Endothelial cell of umbilical vein (primary cell): ENCODE measurements at regions of chr5 and their contacts with region 1.

Region 1: GRCh38 chr5:10577371-10578292 is 13.8 kb downstream of the ANKRD33B start:
- DNase-seq: peak; percentile 86
- H3K4me3 ChIP-seq: no peak overlapping the region
- H3K27ac ChIP-seq: peak overlapping the region; percentile 32
- H3K4me1 ChIP-seq: peaks cover 12% of the 10 kb centered on the region
- H3K27me3 ChIP-seq: no peaks in the 10 kb centered on the region
- CTCF ChIP-seq: no peak
- POLR2A ChIP-seq: peak; percentile 28

Region 2: DNA sequence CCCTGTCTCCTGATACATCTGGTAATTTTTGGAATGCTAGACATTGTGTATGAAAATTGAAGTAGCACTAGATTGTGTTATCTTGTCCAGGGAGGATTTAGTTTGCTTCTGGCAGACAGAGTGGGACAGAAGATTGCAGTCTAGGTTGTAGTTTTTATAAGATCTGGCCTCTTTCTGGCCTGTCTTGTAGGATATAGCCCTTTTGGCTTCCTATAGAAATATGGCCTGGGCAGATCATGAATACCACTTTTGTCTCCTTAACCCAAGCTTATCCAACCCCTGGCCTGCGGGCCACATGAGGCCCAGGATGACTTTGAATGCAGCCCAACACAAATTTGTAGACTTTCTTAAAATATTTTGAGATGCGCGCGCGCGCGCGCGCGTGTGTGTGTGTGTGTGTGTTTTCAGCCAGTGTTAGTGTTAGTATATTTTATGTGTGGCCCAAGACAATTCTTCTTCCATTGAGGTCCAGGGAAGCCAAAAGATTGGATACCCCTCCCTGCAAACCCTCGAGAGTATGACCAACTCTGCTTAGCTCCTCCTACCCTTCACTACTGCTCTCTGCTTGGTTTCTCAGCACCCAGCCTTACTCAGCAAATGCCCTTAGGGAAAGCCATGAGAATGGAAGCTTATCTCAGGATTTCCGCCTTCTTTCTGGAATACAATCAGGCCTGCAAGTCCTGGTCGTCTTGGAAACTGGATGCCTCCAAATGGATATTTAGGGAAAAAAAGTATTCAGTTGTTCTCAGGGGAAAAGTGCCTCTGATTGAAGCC is 12.8 kb after region 1 on chr5:
- CTCF ChIA-PET with region 1: interaction called, 9 read pairs
- POLR2A ChIA-PET with region 1: interaction called, 3 read pairs
- dilution Hi-C with region 1: no loop called
- intact Hi-C with region 1: loop called (anchors 1 kb)
- DNase-seq: peak; percentile 97
- H3K4me3 ChIP-seq: no peak overlapping the region
- H3K27ac ChIP-seq: peak overlapping the region; percentile 49
- H3K4me1 ChIP-seq: peaks cover 27% of the 10 kb centered on the region
- H3K27me3 ChIP-seq: no peaks in the 10 kb centered on the region
- CTCF ChIP-seq: no peak
- POLR2A ChIP-seq: no peak

Region 3: DNA sequence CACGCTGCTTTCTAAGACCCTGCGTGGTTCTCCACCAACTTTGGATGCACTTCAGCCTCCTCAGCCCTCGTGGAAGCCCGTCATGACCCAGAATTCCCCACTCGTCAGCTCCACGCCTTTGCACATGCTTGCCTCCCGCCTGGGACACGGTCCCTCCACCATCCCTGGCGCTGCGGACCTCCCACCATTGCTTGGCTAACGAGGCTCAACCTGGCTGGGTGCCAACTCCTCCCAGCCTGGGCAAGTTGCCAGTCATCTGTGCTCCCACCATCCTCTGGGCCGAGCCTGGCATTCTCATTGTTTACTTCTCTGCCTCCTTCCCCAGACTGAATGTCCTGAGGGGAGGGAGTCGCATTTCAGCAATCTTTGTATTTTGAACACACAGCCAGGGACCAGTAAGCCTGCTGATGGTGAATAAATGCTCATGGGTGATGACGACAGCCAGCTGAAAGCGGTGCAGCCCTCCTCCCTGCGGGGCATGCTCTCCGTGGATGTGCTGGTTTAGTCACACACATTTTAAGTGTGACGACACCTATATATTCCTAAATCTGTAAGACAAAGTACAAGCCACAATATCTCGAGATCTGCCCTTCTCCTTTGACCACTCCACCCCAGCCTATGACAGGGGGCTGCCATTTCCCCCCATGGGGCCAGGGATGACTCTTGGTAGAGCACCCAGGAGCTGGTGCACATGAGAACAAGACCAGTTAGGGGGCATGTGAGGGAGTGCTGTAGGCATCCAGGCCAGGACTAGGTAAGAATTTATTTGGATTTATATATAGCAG is 23.8 kb after region 1 on chr5:
- CTCF ChIA-PET with region 1: no interaction called
- POLR2A ChIA-PET with region 1: interaction called, 4 read pairs
- dilution Hi-C with region 1: no loop called
- intact Hi-C with region 1: loop called (anchors 1 kb)
- DNase-seq: peak; percentile 97
- H3K4me3 ChIP-seq: no peak overlapping the region
- H3K27ac ChIP-seq: peak overlapping the region; percentile 39
- H3K4me1 ChIP-seq: peaks cover 11% of the 10 kb centered on the region
- H3K27me3 ChIP-seq: no peaks in the 10 kb centered on the region
- CTCF ChIP-seq: no peak
- POLR2A ChIP-seq: no peak

Region 4: GRCh38 chr5:10645146-10645545 is 67.5 kb after region 1 on chr5:
- CTCF ChIA-PET with region 1: no interaction called
- POLR2A ChIA-PET with region 1: no interaction called
- dilution Hi-C with region 1: no loop called
- intact Hi-C with region 1: no loop called
- DNase-seq: no peak
- H3K4me3 ChIP-seq: no peak overlapping the region
- H3K27ac ChIP-seq: no peak overlapping the region
- H3K4me1 ChIP-seq: peaks cover 3% of the 10 kb centered on the region
- H3K27me3 ChIP-seq: no peaks in the 10 kb centered on the region
- CTCF ChIP-seq: no peak
- POLR2A ChIP-seq: no peak